Prostate gland (tissue), 2 donors: ENCODE measurements at regions of chr17 and their contacts with region 1.

Region 1: GRCh38 chr17:49707608-49708514 is at the start of gene SLC35B1:
- DNase-seq: peak; percentile 99
- H3K4me3 ChIP-seq: peak within 1 kb of the TSS; percentile 92 to 94
- H3K27ac ChIP-seq: peak within 1 kb of the TSS; percentile 94
- H3K4me1 ChIP-seq: peaks cover 4% of the 10 kb centered on the region
- H3K27me3 ChIP-seq: no peaks in the 10 kb centered on the region
- CTCF ChIP-seq: peak; percentile 68 to 87 (median 80)
- POLR2A ChIP-seq: no peak
- total RNA-seq, gene SLC35B1: 31.0 to 81.0 TPM

Region 2: DNA sequence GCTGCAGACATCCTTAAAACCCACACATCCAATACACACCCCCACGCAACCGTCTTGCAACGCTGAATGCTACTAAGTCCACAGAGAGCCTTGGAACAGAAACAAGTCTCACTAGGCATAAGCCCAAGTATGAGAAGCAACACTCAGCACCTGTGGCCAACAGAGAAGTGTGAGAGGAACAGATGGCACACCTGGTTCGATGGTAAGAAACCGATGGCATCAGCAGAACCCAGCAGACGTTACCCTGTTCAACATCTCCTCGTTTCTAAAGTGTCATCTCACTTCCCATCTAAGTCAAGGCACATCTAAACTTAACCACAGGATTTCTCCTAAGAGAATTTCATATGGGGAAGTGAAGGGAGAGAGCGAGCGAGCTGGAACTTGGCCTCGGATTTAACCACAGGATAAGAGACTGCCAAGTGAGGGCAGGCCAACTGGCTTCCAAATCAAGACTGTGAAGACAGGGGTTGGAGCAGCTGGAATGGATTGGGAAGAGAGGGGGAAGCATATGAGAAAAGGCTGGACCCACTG is 91.2 kb before region 1 on chr17:
- intact Hi-C with region 1: no loop called
- DNase-seq: no peak
- H3K4me3 ChIP-seq: no peak overlapping the region
- H3K27ac ChIP-seq: peak overlapping the region in 1 of 2 donors; percentile 56
- H3K4me1 ChIP-seq: peaks cover 7% of the 10 kb centered on the region
- H3K27me3 ChIP-seq: no peaks in the 10 kb centered on the region
- CTCF ChIP-seq: no peak
- POLR2A ChIP-seq: no peak

Region 3: GRCh38 chr17:49779739-49780231 is 71.9 kb after region 1 on chr17:
- intact Hi-C with region 1: loop called (anchors 5 kb)
- DNase-seq: no peak
- H3K4me3 ChIP-seq: no peak overlapping the region
- H3K27ac ChIP-seq: no peak overlapping the region
- H3K4me1 ChIP-seq: no peaks in the 10 kb centered on the region
- H3K27me3 ChIP-seq: no peaks in the 10 kb centered on the region
- CTCF ChIP-seq: peak in 3 of 4 experiments; percentile 31 to 51 (median 49)
- POLR2A ChIP-seq: no peak

Region 4: DNA sequence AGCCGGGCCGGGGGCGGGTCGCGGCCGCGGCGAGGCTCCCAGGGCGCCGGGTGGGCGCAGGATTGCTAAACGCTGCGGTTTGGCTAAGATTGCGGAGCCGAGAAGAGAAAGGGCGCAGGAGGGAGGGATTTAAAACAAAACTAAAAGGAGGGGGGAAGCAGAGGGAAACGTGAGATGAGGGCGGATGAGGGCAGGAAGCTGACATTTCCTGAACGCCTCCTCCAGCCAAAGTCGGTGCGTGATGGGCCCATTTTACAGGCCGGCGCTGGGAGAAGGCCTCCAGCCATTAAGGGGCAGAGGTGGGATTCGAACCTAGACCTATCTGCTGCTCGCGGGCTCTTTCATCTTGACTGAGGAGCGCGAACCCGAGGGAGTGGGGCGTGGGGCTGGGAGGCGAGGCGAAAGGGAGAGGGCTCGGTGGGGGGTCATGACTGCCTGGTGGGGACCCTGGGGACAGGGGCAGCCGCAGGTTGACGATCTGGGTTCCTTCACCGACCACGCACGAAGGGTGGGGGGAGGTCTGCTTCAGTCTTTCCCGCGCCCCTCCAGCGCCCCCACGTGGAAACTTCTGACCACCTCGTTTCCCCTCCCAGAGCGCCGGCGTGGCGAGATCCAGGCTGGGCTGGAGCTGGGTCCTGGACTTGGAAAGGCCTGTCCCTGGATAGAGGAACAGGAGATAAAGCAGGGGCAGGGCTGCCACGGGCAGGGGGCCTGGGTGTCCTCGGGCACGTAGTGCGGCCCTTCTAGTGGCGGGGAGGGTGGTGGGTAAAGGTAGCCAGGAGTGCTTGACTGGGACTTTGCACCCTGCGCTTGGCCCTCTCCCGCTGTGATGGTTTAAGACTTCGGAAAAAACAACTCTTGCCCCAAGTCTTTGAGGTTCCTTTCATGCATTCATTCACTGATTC is 143.8 kb after region 1 on chr17:
- intact Hi-C with region 1: loop called (anchors 5 kb)
- DNase-seq: peak; percentile 69
- H3K4me3 ChIP-seq: peak overlapping the region; percentile 56 to 62
- H3K27ac ChIP-seq: peak overlapping the region in 1 of 2 donors; percentile 38
- H3K4me1 ChIP-seq: no peaks in the 10 kb centered on the region
- H3K27me3 ChIP-seq: no peaks in the 10 kb centered on the region
- CTCF ChIP-seq: peak; percentile 29 to 77 (median 70)
- POLR2A ChIP-seq: no peak